ENCODE measurements at regions of chr10 and their contacts with region 1.

Region 1: GRCh38 chr10:20674926-20675325 is 222.2 kb downstream of the NEBL start:
- DNase-seq: no peak

Region 2: GRCh38 chr10:20624642-20625041 is 50.3 kb before region 1 on chr10:
- intact Hi-C with region 1: loop called (anchors 5 kb)
- DNase-seq: no peak

Measured in cardiac septum (tissue), 1 donor.